Cardiac septum (tissue), 1 donor: ENCODE measurements at regions of chr7 and their contacts with region 1.

Region 1: GRCh38 chr7:24812310-24812945 is 55.2 kb upstream of the GSDME start:
- DNase-seq: no peak

Region 2: DNA sequence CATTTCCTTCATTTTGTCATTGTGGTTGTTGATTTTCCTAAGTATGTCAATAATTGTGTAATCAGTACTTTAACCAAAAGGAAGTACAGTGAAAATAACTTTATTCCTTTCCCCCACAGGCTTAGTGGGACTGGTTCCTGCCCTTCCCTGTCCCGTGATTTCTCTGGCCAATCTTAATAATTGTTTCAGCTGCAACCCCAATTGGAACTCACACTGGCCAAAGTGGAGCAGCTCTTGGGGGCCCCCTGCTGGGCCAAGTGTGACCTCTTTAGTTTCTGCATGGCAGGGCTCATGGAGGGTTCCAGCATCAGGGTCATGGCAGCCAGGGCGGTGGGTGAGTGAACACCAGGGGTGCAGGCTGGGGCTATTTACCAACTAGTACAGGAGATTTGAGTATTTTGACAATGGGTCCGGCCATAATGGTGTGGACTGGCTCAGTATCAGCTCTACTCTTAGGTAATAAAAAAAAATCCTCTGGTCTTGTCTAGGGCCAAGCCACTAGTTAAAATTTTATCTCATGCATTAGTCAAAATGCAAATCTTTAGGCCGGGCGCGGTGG is 280.9 kb after region 1 on chr7:
- intact Hi-C with region 1: loop called (anchors 5 kb)
- DNase-seq: peak; percentile 80